Activated CD4-positive, alpha-beta T cell treated with anti-CD3 and anti-CD28 coated beads, Interleukin-2, amount 10 ng/mL, durations not matched to agents 24 days and 14 days (primary cell): ENCODE measurements at regions of chr7 and their contacts with region 1.

Region 1: DNA sequence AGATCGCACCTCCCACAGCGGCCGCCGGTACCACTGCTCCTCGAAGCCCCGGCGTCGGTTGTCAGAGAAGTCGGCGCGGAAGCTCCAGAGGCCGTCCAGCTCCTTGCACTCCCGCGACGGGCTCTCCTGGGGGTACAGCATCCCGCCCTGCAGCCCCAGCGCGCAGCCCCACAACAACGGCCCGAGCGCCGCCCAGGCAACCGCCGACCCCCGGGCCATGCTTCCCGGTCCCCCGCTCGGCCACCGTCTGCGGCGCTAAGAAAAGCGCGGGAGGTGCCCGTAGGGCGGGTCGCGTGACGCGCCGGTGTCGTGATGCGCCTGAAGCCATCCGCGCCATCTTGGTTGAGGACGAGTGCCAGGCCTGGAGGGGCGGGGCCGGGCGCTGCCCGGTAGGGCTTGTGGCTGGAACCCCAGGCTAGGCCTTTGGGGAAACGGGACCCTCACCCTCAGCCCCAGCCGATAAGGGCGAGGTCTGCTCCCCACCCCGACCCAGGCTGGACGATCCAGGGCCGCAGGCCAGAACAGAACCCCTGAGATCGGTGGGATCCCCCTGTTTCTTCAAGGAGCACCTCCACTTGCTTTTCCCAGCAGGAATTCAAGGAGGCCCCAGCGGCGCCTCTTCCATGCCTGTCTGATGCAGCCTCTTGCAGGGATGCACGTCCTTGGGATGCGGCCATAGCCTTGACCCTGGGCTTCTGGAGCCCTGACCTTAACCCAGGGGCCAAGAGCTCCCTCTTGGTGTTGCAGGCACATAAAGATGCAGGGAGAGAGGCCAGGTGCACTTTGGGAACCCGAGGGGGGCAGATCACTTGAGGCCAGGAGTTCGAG is at the start of gene GUSB:
- DNase-seq: peak; percentile 97
- H3K4me3 Mint-ChIP-seq: peak within 1 kb of the TSS; percentile 87
- H3K27ac Mint-ChIP-seq: peak within 1 kb of the TSS; percentile 91
- H3K4me1 Mint-ChIP-seq: peaks cover 10% of the 10 kb centered on the region
- H3K27me3 Mint-ChIP-seq: no peaks in the 10 kb centered on the region
- total RNA-seq, gene GUSB: 52.2 and 54.7 TPM in 2 replicates

Region 2: DNA sequence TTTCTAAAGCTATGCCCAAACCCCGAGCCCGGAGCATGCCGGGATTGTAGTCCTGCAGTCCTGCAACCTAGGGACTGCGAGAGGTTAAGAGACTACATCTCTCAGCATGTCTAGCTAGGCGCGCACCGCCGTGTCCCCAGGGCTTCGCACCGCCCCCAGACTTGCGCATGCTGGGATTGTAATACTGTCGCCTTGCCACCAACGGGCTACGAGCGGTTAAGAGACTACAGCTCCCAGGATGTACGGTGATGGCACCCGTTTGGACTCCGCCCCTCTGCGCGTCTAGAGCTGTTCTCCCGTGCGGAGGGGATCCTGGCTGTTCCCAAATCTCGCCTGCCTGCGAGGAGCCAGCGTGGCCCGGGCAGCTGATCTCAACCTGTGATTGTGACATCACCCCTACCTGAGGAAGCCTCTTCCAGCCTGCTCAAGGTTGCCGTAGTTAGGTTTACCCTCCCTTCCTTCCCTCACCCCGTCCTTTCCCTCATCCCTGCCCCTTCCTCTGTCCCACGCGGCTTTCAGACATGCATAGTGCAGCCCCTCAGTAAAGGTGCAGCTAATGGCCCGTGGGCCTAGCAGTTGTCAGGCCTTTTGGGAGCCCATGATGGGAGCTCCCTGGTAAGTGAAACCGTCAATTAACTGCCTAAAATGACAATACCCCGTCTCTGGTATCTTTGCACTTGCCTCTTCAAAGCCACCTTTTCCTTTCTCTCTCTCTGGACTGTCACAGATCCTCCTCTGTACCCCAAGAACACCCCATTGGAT is 1674.7 kb before region 1 on chr7:
- intact Hi-C with region 1: loop called (anchors 10 kb)
- DNase-seq: peak; percentile 97
- H3K4me3 Mint-ChIP-seq: peak overlapping the region; percentile 97
- H3K27ac Mint-ChIP-seq: peak overlapping the region; percentile 93
- H3K4me1 Mint-ChIP-seq: peaks cover 14% of the 10 kb centered on the region
- H3K27me3 Mint-ChIP-seq: no peaks in the 10 kb centered on the region

Region 3: DNA sequence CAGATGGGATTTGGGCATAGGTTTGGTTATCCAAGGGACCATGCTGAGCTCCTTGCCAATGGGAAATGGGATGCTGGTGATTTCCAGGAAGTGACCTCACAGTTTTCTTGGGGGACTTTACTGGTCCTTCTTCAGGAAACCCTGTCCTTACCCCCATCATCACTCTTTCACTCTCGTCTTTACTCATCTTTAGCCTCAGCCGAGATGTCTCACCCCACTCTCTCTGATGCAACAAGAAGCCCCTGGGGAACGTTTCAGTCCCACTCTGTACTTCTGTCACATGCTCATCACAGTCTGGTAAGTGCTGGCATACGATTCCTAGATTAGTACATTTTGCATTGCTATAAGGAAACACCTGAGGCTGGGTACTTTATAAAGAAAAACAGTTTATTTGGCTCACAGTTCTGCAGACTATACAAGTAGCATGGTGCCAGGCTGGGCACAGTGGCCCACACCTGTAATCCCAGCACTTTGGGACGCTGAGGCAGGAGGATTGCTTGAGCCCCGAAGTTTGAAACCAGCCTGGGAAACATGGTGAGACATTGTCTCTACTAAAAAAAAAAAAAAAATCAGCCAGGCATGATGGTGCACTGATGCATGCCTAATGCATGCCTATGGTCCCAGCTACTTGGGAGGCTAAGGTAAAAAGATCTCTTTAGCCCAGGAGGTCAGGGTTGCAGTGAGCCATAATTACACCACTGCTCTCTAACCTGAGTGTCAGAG is 172.8 kb before region 1 on chr7:
- intact Hi-C with region 1: no loop called
- DNase-seq: no peak
- H3K4me3 Mint-ChIP-seq: no peak overlapping the region
- H3K27ac Mint-ChIP-seq: no peak overlapping the region
- H3K4me1 Mint-ChIP-seq: no peaks in the 10 kb centered on the region
- H3K27me3 Mint-ChIP-seq: peaks cover 2% of the 10 kb centered on the region

Region 4: DNA sequence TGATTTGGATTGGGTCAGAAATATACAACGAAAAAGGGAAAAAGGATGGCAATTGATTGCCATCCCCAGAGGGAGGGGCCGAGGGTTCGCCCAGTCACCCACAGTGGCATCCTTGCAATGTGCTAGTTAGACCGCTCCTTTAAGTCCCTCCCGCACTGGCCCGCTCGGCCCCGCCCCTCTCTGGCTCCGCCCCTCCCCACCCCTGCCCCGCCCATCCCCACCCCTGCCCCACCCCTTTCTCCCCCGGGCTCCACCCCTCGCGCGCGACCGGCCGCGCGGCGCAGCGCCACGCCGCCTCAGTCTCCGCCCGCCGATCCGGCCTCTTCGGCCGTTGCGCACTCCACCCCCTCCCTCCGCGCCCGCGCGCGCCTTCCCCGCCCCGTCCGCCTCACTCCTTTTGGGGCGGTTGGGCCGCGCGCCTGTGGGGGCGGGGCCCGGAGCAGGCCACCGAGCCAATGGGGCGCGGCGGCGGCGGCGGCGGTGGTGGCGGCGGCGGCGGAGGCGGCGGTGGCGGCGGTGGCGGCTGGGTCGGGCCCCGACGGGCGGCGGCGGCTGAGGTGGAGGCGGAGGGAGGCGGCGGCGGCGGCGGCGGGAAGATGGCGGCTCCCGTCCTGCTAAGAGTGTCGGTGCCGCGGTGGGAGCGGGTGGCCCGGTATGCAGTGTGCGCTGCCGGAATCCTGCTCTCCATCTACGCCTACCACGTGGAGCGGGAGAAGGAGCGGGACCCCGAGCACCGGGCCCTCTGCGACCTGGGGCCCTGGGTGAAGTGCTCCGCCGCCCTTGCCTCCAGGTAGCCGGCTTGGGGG is 109.2 kb before region 1 on chr7 and contains the start of gene VKORC1L1:
- intact Hi-C with region 1: loop called (anchors 1 kb)
- DNase-seq: peak; percentile 98
- H3K4me3 Mint-ChIP-seq: peak within 1 kb of the TSS; percentile 87
- H3K27ac Mint-ChIP-seq: peak within 1 kb of the TSS; percentile 88
- H3K4me1 Mint-ChIP-seq: peaks cover 8% of the 10 kb centered on the region
- H3K27me3 Mint-ChIP-seq: peaks cover 1% of the 10 kb centered on the region
- total RNA-seq, gene VKORC1L1: 27.9 and 31.0 TPM in 2 replicates

Region 5: GRCh38 chr7:66114793-66115649 is 132.8 kb after region 1 on chr7 and contains the start of gene CRCP:
- intact Hi-C with region 1: loop called (anchors 5 kb)
- DNase-seq: peak; percentile 95
- H3K4me3 Mint-ChIP-seq: peak within 1 kb of the TSS; percentile 100
- H3K27ac Mint-ChIP-seq: peak within 1 kb of the TSS; percentile 98
- H3K4me1 Mint-ChIP-seq: peaks cover 37% of the 10 kb centered on the region
- H3K27me3 Mint-ChIP-seq: no peaks in the 10 kb centered on the region
- total RNA-seq, gene CRCP: 37.2 and 41.9 TPM in 2 replicates

Region 6: DNA sequence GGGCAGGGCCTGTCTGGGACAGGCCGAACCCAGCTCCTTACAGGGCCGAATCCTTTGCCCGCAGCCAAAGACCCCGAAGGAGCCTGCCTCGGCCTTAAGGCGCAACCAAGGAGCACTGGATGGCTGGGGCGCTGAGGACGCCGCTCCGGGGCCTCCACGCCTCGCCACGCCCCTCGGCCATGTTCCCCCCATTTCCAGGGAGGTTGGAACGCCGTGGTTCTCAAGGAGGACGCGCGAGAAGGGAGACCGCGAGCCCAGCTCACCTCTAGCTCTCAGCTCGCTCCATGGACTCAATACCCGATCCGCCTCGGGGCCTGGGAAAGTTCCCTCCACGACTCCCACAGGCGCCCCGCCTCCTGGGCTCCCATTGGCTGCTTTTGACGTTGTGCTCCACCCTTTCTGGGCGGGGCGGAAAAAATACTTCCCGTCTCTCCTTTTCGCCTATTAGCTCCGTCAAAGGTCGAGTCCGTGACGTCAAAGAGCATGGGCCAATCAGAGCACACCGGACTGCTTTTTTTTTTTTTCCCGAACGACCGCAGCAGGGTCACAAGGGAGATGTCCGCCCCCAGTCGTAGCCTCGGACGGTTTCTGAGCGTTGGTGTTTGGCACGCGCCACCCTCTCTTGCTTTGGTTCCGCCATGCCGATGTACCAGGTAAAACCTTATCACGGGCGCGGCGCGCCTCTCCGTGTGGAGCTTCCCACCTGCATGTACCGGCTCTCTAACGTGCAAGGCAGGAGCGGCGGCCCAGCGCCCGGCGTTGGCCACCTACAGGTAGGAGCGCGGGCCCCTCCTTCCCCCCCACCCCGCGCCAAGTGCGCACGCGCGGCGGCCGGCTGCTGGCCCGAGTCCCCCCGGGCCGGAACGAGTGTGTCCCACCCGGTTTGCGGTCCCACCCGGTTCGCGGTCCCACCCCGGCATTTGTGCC is 1320.2 kb after region 1 on chr7:
- intact Hi-C with region 1: loop called (anchors 10 kb)
- DNase-seq: peak; percentile 99
- H3K4me3 Mint-ChIP-seq: peak overlapping the region; percentile 90
- H3K27ac Mint-ChIP-seq: peak overlapping the region; percentile 97
- H3K4me1 Mint-ChIP-seq: peaks cover 26% of the 10 kb centered on the region
- H3K27me3 Mint-ChIP-seq: peaks cover 2% of the 10 kb centered on the region